Esophagus muscularis mucosa (tissue), 4 donors: ENCODE measurements at regions of chr20 and their contacts with region 1.

Region 1: GRCh38 chr20:15155848-15156401 is 818.5 kb upstream of the FLRT3 start:
- DNase-seq: no peak
- H3K4me3 ChIP-seq: no peak overlapping the region
- H3K27ac ChIP-seq: no peak overlapping the region
- H3K4me1 ChIP-seq: no peaks in the 10 kb centered on the region
- H3K27me3 ChIP-seq: no peaks in the 10 kb centered on the region
- CTCF ChIP-seq: no peak
- EP300 ChIP-seq: no peak
- POLR2A ChIP-seq: no peak

Region 2: GRCh38 chr20:15220778-15221565 is 65.0 kb after region 1 on chr20:
- intact Hi-C with region 1: no loop called
- DNase-seq: no peak
- H3K4me3 ChIP-seq: no peak overlapping the region
- H3K27ac ChIP-seq: no peak overlapping the region
- H3K4me1 ChIP-seq: no peaks in the 10 kb centered on the region
- H3K27me3 ChIP-seq: no peaks in the 10 kb centered on the region
- CTCF ChIP-seq: no peak
- EP300 ChIP-seq: no peak
- POLR2A ChIP-seq: no peak

Region 3: DNA sequence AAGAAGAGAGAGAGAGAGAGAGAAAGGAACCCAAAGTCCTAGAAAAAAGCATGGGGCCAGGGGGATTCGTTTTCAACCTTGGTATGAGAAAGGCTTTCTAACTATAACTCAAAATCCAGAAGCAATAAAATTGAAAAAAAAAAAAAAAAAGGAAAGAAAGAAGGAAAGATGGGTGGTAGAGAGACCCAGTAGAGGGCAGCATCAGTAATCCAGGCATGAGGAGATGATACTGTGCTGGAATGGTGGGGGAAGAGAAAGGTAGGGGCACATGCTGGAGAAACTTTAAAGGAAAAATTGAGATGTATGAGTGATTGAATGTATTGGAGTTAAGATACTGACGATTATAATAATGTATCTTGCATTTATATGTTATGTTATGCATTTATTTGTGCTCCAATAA is 222.2 kb after region 1 on chr20:
- intact Hi-C with region 1: no loop called
- DNase-seq: no peak
- H3K4me3 ChIP-seq: no peak overlapping the region
- H3K27ac ChIP-seq: no peak overlapping the region
- H3K4me1 ChIP-seq: no peaks in the 10 kb centered on the region
- H3K27me3 ChIP-seq: no peaks in the 10 kb centered on the region
- CTCF ChIP-seq: no peak
- EP300 ChIP-seq: no peak
- POLR2A ChIP-seq: no peak

Region 4: GRCh38 chr20:16501301-16501700 is 1345.4 kb after region 1 on chr20:
- intact Hi-C with region 1: loop called (anchors 10 kb)
- DNase-seq: no peak
- H3K4me3 ChIP-seq: no peak overlapping the region
- H3K27ac ChIP-seq: no peak overlapping the region
- H3K4me1 ChIP-seq: no peaks in the 10 kb centered on the region
- H3K27me3 ChIP-seq: no peaks in the 10 kb centered on the region
- CTCF ChIP-seq: no peak
- EP300 ChIP-seq: no peak
- POLR2A ChIP-seq: no peak